ENCODE measurements at regions of chr1 and their contacts with region 1.

Region 1: DNA sequence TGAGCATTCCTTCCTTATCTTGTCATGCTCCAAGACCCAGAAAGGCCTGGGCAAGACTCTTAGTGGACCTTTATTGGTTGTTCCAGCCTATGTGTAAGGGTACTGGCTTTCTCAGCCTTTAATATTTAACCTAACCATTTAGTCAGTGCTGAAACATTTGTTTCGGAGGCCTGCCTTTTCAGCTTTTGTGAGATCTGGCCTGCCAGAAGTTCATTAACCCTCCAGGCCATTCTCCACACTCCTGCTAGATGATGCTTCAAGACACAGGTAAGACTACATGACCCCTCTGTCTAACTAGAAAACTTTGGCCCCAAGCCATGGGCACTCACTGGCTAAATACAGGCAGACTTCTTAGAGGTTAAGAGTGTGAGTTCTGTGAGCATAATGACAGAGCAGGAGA is 138.4 kb upstream of the ZP4 start:
- DNase-seq: no peak
- H3K4me3 ChIP-seq: no peak overlapping the region
- H3K27ac ChIP-seq: no peak overlapping the region
- H3K4me1 ChIP-seq: no peaks in the 10 kb centered on the region
- H3K27me3 ChIP-seq: no peaks in the 10 kb centered on the region
- CTCF ChIP-seq: no peak
- EP300 ChIP-seq: no peak
- POLR2A ChIP-seq: no peak

Region 2: DNA sequence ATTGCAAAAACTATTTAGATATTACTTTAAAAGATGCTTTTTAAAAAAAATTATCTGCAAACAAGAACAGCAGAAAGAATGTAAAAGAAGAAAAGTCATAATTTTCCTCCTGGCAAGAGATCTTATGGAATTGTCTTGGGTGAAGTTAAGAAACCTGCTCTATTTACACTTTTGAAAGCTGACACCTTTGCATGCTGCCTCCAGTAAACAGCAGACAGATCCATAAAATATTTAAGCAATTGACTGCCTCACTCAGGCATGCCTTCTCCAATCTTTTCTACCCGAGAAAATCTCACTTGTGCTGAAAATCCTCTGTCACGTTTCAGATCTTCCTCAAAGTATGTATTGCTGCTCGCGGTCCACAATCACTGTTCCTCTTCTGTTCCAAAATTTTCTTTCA is 30.5 kb before region 1 on chr1:
- in situ Hi-C with region 1: no loop called
- intact Hi-C with region 1: no loop called
- DNase-seq: no peak
- H3K4me3 ChIP-seq: no peak overlapping the region
- H3K27ac ChIP-seq: no peak overlapping the region
- H3K4me1 ChIP-seq: no peaks in the 10 kb centered on the region
- H3K27me3 ChIP-seq: no peaks in the 10 kb centered on the region
- CTCF ChIP-seq: no peak
- EP300 ChIP-seq: no peak
- POLR2A ChIP-seq: no peak

Region 3: DNA sequence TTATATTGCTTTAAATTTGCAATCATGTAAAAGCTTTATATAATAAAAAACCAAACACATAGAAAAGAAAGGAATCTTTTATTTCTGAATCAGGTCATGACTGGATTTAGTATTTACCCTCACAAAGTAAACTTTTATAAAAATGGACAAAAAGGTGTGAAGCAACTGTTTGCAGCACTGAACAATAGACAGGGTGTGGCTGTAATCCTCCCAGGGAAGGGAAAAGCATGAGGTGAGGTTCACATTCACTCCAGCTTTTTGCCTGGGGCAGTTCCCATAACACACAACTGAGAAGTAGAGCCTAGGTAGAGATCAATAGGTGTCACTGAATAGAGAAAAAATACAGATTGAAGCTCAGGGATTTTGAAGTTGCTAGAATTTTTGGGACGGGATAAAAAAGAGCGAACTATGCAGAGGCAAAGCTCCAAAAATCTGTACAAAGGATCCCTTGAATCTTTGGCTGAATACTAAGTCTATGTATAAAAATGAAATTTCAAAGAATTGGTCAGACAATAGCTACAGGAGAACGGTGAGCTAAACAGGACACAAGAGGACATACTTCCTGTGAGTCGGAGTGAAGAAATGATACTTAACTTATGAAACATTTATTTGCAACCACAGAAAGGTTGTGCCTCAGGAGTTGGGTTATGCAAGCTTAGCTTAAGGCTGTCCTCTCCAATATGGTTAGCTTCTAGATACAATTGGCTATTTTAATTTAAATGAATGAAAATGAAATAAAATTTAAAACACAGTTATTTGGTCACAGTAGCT is 23.6 kb after region 1 on chr1:
- in situ Hi-C with region 1: no loop called
- intact Hi-C with region 1: loop called (anchors 2 kb)
- DNase-seq: no peak
- H3K4me3 ChIP-seq: no peak overlapping the region
- H3K27ac ChIP-seq: no peak overlapping the region
- H3K4me1 ChIP-seq: no peaks in the 10 kb centered on the region
- H3K27me3 ChIP-seq: no peaks in the 10 kb centered on the region
- CTCF ChIP-seq: no peak
- EP300 ChIP-seq: no peak
- POLR2A ChIP-seq: no peak

Region 4: GRCh38 chr1:238088560-238089290 is 59.6 kb after region 1 on chr1:
- in situ Hi-C with region 1: loop called in 1 of 4 experiments (anchors 10 kb)
- intact Hi-C with region 1: no loop called
- DNase-seq: no peak
- H3K4me3 ChIP-seq: no peak overlapping the region
- H3K27ac ChIP-seq: no peak overlapping the region
- H3K4me1 ChIP-seq: no peaks in the 10 kb centered on the region
- H3K27me3 ChIP-seq: no peaks in the 10 kb centered on the region
- CTCF ChIP-seq: no peak
- EP300 ChIP-seq: no peak
- POLR2A ChIP-seq: no peak

Measured in transverse colon (tissue), 4 donors.